Activated CD4-positive, alpha-beta T cell treated with anti-CD3 and anti-CD28 coated beads, Interleukin-2, amount 10 ng/mL, durations not matched to agents 24 days and 14 days (primary cell): ENCODE measurements at regions of chr3 and their contacts with region 1.

Region 1: DNA sequence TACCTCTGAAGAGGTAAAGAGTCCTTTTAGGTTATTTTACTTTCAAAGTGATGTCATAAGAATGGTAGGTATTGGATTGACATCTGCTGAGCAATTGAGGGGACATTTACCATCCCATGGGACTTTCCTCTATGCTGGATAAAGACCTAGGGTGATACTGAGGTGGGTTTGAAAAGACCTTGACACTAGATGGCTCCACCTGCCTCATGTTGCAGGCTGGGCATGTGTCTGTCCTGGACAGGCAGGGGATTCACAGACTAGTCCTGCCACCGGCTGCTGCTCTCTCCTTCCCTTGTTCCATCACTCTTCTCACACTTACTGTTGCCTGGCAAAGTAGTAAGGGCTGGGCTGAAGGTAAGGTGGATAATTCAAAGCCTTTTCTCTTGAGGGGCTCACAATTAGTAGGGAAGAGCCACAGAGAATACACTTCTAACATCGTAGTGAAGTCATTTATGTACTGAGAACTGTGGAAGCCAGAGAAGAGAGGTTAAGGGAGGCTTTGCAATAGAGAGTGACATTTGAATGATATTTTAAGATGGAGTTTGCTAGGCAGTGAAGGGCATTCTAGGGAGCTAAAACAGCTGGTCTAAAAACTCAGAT is 27.7 kb downstream of the TRAK1 start:
- DNase-seq: peak; percentile 71
- H3K4me3 Mint-ChIP-seq: no peak overlapping the region
- H3K27ac Mint-ChIP-seq: no peak overlapping the region
- H3K4me1 Mint-ChIP-seq: peaks cover 16% of the 10 kb centered on the region
- H3K27me3 Mint-ChIP-seq: no peaks in the 10 kb centered on the region

Region 2: DNA sequence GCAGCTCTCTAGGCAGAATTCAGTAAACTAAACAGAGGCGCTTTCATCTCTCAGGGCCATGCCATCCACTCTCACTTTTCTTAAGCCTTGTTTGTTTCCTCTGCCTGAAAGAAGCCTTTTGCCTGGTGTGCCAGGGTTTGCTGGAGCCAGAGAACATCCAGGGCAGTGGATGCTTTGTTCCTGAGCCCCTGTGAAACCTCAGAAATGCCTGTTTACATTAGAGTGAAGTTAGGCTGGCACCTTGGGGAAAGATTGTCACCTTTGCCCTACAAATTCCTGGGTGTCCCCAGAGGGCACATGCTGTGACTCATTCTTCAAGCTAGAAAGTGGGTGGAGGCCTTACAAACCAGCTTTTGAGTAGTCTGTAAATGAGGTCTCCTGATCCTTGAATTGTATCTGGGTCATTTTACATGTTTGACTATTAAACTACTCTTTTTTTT is 38.4 kb before region 1 on chr3:
- intact Hi-C with region 1: no loop called
- DNase-seq: no peak
- H3K4me3 Mint-ChIP-seq: peak overlapping the region; percentile 26
- H3K27ac Mint-ChIP-seq: peak overlapping the region; percentile 84
- H3K4me1 Mint-ChIP-seq: peaks cover 37% of the 10 kb centered on the region
- H3K27me3 Mint-ChIP-seq: no peaks in the 10 kb centered on the region

Region 3: DNA sequence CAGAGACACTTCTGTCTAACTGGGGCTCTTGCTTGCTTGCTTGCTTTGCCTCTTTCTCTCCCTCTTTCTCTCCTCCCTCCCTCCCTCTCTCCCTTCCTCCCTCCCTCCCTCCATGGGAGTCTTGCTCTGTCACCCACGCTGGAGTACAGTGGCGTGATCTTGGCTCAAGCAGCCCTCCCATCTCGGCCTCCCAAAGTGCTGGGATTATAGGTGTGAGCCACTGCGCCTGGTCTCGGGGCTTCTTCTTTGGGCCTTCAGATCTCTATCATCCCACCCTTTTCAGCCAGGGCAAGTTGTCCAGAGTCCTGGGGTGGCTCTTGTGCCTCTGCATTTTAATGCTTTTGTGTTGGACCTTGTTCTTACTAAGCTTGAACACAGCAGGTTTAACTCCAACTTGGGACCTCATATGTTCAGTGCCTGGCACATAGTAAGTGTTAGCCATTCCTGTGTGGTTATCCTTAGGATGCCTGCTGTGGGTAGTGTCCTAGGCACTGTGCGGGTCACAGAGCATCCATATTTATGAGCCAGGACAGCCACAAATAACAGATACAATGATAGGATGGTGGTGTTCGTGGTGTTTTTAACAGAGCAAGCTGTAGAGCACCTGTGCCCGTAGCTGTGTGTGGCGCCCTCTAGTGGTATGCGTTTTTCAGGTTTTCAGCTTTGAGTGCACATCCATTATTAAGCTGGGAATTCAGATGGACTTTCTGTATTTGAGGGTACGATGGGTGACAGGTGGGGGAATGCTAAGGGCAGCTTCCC is 72.0 kb after region 1 on chr3:
- intact Hi-C with region 1: loop called (anchors 1 kb)
- DNase-seq: peak; percentile 91
- H3K4me3 Mint-ChIP-seq: no peak overlapping the region
- H3K27ac Mint-ChIP-seq: peak overlapping the region; percentile 52
- H3K4me1 Mint-ChIP-seq: peaks cover 28% of the 10 kb centered on the region
- H3K27me3 Mint-ChIP-seq: no peaks in the 10 kb centered on the region

Region 4: GRCh38 chr3:42443819-42444436 is 325.1 kb after region 1 on chr3:
- intact Hi-C with region 1: loop called (anchors 5 kb)
- DNase-seq: peak; percentile 93
- H3K4me3 Mint-ChIP-seq: no peak overlapping the region
- H3K27ac Mint-ChIP-seq: no peak overlapping the region
- H3K4me1 Mint-ChIP-seq: no peaks in the 10 kb centered on the region
- H3K27me3 Mint-ChIP-seq: peaks cover 7% of the 10 kb centered on the region